MCF 10A (cell line): ENCODE measurements at regions of chr4 and their contacts with region 1.

Region 1: DNA sequence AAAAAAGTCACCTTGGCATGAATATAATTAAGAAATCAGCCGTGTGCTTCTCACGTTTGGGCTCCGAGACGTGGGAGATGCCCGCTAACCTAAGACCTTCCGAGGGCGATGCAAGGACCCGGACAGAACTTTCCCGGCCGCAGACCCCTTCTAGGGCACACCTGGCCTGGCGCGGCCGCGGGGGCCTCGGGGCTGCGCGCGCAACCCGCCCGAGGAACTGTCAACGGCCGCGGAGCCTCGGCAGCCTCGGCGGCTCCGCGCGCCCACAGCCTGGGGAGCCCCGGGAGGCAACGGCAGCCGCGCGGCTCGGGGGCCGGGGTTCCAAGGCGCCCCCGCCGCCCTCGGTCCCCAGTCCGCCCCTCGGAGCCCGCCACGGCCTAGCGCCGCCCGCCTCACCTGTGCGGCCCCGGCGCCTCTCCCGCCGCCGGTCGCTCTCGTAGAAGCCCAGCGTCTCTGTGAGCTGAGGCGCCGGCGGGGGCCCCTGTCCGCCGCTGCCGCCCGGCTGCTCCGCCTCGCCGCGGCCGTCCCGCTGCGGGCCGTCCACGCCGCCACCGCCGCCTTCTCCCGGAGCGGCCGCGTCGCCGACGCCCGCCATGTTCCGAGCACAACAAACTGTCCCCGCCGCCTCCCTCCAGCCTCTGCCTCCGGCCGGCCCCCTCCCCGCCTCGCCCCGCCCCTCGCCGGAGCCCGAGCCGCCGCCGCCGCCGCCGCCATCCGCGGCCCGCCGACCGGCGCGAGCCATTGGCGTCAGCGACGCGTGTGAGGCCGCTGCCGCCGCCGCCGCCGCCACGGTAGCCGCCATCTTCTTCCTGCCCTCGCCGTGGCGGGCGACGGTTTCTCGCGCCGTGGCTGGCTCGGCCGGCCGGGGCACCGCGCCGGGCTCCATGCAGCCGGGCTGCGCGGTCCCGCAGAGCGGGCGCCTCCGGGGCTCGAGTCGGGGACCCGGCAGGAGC is at the start of gene TAPT1:
- DNase-seq: peak; percentile 66
- H3K4me3 Mint-ChIP-seq: peak within 1 kb of the TSS; percentile 78
- H3K27ac Mint-ChIP-seq: peak within 1 kb of the TSS; percentile 88
- H3K4me1 Mint-ChIP-seq: peaks cover 27% of the 10 kb centered on the region
- H3K27me3 Mint-ChIP-seq: no peaks in the 10 kb centered on the region
- CTCF ChIP-seq: no peak
- total RNA-seq, gene TAPT1: 22.0 and 27.8 TPM in 2 replicates

Region 2: DNA sequence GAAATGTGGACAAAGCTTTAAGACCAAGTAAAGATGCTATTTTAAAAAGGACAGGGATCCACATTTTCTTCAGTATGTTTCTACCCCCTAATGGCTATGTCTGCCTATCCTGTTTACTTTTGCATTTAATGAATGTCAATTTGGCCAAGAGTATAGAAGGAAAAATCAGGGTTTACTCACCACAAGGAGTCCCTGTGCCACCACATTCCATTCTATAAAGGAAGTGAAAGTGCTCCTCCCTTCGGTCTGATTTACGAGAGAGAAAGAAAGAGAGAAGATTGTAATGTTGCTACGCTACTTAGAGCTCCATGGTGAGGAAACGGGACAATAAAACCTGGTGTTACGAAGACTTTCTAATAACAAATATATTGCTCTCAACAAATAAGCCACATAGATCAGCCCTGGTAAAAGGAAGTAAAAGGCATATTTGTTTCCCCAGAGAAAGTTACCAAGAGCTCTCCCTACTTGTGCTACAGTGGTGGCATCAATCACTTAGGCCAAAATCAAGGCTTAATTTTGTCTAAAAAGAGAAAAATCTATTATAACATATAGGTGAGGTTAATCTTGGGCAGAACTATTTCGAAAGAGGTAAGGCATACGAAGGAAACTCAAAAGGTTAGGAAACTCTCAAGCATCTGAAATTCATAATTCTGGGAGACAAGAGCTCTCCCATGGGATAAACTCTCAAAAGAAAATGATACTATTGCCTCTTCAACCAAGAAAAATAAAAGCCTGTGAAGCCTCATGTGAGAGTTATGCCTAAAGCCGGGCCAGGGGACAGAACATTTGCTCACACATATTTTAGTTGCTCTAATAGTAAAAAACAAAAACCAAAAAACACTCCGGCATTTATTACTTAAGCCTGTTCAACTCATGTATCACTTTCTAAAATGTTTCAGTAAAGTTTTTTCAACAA is 29.4 kb before region 1 on chr4:
- CTCF ChIA-PET with region 1: interaction called, 6 read pairs
- POLR2A ChIA-PET with region 1: interaction called, 13 read pairs
- intact Hi-C with region 1: no loop called
- DNase-seq: peak; percentile 62
- H3K4me3 Mint-ChIP-seq: peak overlapping the region; percentile 56
- H3K27ac Mint-ChIP-seq: peak overlapping the region; percentile 44
- H3K4me1 Mint-ChIP-seq: no peaks in the 10 kb centered on the region
- H3K27me3 Mint-ChIP-seq: no peaks in the 10 kb centered on the region
- CTCF ChIP-seq: peak; percentile 19

Region 3: DNA sequence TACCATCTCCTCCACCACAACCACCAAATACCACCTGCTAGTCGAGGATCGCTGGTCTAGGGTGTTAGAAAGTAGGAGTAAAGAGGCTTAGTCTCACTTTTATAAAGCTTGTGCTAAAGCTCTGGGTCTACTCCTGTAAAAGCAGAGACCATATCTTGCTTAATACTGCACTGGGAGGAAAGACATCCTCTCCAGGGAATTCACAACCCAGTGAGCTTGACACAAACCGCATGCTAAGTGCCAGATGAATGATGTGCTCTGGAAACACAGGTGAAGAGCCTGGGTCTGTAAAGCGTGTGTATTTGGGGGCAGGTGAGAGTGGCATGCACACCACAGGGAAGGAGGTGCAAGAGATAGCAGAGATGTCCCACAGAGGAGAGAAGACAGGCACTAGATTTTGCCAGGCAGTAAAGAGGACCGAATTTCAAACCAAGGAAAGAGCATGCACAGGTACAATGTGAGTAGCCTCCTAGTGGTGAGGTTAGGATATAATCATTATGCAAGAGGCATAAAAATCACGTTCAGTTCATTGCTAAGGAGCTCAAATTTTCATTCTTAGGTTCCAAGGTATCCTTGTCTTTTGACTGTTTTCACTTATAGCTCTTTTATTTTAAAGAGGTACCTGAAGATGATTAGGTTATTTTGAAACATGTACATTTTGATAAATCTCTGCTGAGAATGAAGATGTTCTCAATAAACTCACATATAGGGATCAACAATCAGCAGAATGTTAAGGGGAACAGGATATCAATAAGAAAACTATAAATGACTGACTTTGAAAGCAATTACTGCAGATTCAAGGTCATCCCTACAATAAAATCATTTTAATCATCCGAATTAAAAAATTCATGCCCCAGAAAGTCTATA is 20.6 kb before region 1 on chr4:
- CTCF ChIA-PET with region 1: interaction called, 12 read pairs
- POLR2A ChIA-PET with region 1: interaction called, 4 read pairs
- intact Hi-C with region 1: no loop called
- DNase-seq: peak; percentile 37
- H3K4me3 Mint-ChIP-seq: no peak overlapping the region
- H3K27ac Mint-ChIP-seq: no peak overlapping the region
- H3K4me1 Mint-ChIP-seq: peaks cover 6% of the 10 kb centered on the region
- H3K27me3 Mint-ChIP-seq: no peaks in the 10 kb centered on the region
- CTCF ChIP-seq: peak; percentile 49

Region 4: GRCh38 chr4:16707874-16708273 is 481.7 kb after region 1 on chr4:
- CTCF ChIA-PET with region 1: no interaction called
- POLR2A ChIA-PET with region 1: no interaction called
- intact Hi-C with region 1: no loop called
- DNase-seq: no peak
- H3K4me3 Mint-ChIP-seq: no peak overlapping the region
- H3K27ac Mint-ChIP-seq: no peak overlapping the region
- H3K4me1 Mint-ChIP-seq: no peaks in the 10 kb centered on the region
- H3K27me3 Mint-ChIP-seq: peaks cover 42% of the 10 kb centered on the region
- CTCF ChIP-seq: no peak